ENCODE measurements at regions of chr2 and their contacts with region 1.

Region 1: GRCh38 chr2:222903234-222904220 is 42.7 kb downstream of the ACSL3 start:
- DNase-seq: no peak
- ATAC-seq: peak; percentile 77 to 82
- H3K4me3 ChIP-seq: no peak overlapping the region
- H3K27ac ChIP-seq: no peak overlapping the region
- H3K4me1 ChIP-seq: peaks cover 34% of the 10 kb centered on the region
- H3K27me3 ChIP-seq: no peaks in the 10 kb centered on the region
- CTCF ChIP-seq: peak; percentile 67

Region 2: DNA sequence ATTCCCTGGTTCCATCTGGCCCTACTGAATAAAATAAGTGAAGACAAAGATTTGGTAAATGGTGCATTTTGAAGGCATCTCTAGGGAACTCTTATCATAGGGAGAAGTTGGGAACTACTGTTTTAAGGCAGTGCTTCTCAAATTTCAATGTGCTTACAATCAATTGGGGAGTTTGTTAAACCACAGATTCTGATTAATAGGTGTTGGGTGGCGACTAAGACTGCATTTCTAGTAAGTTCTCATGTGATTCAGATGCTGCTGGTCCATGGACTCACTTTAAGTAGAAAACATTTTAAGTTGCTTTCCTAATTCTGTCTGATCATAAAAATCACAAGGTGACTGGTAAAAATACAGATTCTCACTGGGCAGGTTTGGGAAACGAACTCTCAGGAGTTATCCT is 262.2 kb before region 1 on chr2:
- intact Hi-C with region 1: no loop called
- DNase-seq: no peak
- ATAC-seq: no peak
- H3K4me3 ChIP-seq: no peak overlapping the region
- H3K27ac ChIP-seq: no peak overlapping the region
- H3K4me1 ChIP-seq: no peaks in the 10 kb centered on the region
- H3K27me3 ChIP-seq: no peaks in the 10 kb centered on the region
- CTCF ChIP-seq: no peak

Region 3: GRCh38 chr2:222690564-222691200 is 212.8 kb before region 1 on chr2:
- intact Hi-C with region 1: loop called (anchors 10 kb)
- DNase-seq: peak; percentile 84
- ATAC-seq: peak; percentile 96 to 98
- H3K4me3 ChIP-seq: peak overlapping the region; percentile 12
- H3K27ac ChIP-seq: no peak overlapping the region
- H3K4me1 ChIP-seq: no peaks in the 10 kb centered on the region
- H3K27me3 ChIP-seq: no peaks in the 10 kb centered on the region
- CTCF ChIP-seq: peak; percentile 97

Region 4: DNA sequence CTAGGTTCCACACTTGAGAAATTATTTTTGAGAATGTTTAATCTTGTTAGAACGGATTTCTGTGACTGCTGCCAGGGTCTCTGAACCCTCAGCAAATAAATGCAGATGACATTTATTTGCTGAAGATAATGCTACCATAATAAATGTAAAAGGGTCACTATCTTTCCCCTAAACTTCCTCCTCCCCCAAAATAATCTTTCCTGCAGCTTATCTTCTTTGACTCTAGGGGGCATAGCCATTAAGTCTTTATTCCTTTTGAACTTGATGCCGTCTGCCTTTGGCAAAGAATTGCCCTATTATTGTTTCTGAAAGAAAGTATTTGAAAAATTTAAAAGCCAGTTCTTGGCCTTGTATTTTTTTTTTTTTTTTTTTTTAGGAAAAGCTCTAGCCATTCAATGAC is 106.3 kb before region 1 on chr2:
- intact Hi-C with region 1: loop called (anchors 10 kb)
- DNase-seq: no peak
- ATAC-seq: peak in 1 of 2 donors; percentile 64
- H3K4me3 ChIP-seq: no peak overlapping the region
- H3K27ac ChIP-seq: peak overlapping the region; percentile 39
- H3K4me1 ChIP-seq: peaks cover 40% of the 10 kb centered on the region
- H3K27me3 ChIP-seq: no peaks in the 10 kb centered on the region
- CTCF ChIP-seq: peak; percentile 46

Region 5: GRCh38 chr2:222844323-222844722 is 59.2 kb before region 1 on chr2:
- intact Hi-C with region 1: no loop called
- DNase-seq: no peak
- ATAC-seq: peak; percentile 50 to 59
- H3K4me3 ChIP-seq: no peak overlapping the region
- H3K27ac ChIP-seq: no peak overlapping the region
- H3K4me1 ChIP-seq: no peaks in the 10 kb centered on the region
- H3K27me3 ChIP-seq: no peaks in the 10 kb centered on the region
- CTCF ChIP-seq: no peak

Region 6: GRCh38 chr2:223180463-223180862 is 276.9 kb after region 1 on chr2:
- intact Hi-C with region 1: no loop called
- DNase-seq: no peak
- ATAC-seq: no peak
- H3K4me3 ChIP-seq: no peak overlapping the region
- H3K27ac ChIP-seq: no peak overlapping the region
- H3K4me1 ChIP-seq: no peaks in the 10 kb centered on the region
- H3K27me3 ChIP-seq: no peaks in the 10 kb centered on the region
- CTCF ChIP-seq: no peak

Measured in lower lobe of right lung (tissue), 2 donors.